ENCODE measurements at regions of chr2 and their contacts with region 1.

Region 1: DNA sequence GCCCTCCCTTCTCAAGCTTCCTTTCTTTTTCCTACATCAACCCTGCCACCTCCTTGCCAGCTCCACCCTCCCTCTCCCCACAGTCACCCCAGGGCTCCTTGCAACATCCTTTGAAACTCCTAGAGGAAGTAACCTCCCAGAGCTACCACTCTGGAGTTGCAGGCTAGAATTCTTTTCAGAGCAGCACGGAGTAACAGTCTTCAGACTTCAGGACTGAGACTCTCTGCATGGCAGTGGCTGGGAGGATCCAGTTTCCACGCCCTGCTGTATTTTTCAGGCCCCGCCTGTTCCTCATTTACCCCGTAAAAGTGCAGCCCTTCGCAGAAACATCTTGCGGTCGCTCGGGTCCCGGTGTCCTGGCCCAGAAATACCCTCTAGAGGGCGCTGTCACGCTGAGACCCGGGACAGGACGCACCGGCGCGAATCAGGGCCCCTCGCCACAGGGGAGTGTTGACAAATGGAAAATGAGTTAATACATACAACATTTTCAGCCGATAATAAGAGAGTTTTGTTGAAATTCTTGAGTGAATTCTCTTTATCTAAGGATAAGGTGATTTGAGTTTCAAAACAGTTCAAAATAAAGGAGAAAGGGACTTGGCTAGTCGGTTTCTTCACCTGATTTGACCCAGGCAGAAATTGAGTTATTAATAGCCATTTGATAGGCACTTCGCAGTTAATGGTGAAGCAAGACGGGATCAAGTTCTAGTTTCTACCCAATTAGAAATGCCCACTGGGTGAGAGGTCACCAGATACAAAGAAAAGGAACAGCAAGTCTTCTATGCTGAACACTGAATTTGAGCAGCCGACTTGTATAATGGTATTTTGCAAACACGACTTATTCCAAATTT is 18.5 kb upstream of the NTSR2 start:
- DNase-seq: peak; percentile 80
- CTCF ChIP-seq: peak; percentile 83

Region 2: DNA sequence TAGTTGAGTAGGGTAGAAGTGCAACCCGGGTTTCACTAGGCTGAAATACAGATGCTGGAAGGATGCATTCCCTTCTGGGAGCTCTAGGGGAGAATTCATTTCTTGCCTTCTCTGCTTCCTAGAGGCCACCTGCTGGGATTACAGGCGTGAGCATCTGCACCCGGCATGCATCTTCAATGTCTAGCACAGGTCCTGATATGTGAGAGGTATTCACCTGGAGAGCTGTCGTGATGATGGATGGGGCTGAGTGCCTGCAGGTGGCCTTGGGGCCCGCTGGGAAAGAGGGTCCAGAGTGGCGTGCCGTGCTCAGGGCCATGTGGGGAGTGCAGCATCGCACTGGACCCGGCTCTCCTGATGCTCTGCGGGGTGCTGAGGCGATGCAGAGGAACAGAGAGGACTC is 11.8 kb before region 1 on chr2:
- CTCF ChIA-PET with region 1: interaction called, 10 read pairs
- POLR2A ChIA-PET with region 1: no interaction called
- DNase-seq: no peak
- CTCF ChIP-seq: no peak

Region 3: DNA sequence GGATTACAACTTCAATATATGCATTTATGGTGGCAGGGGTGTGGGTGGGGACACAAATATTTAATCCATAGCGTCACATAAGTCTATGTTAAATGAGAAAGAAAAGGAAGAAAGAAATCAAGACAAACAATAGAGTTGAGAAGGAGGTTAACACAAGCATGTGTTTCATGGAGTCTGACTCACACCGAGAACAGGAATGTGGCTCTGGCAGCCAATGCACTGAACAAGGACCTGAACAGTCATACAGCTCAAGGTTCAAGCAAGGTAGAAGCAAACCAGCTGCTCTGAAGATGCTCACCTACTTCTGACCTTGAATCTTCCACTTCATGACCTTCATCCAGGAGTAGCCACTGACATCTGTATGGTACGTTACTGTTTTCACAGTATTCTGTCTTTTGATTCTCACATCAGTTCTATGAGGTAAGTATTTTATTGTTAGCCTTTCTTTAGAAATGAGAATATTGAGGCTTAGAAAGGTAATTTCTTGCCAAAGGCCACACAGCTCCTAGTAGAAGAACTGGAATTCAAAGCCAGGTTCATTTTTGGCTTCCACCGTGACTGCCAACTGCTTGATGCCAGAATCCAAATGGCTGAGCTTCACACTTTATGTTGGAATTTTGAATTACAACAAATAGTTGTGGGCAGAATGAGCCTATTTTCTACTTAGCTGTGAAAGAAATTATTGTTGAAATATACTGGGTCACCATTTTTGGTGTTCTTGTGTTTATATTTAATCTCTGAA is 22.0 kb after region 1 on chr2:
- CTCF ChIA-PET with region 1: interaction called, 20 read pairs
- POLR2A ChIA-PET with region 1: no interaction called
- DNase-seq: no peak
- CTCF ChIP-seq: no peak

Region 4: DNA sequence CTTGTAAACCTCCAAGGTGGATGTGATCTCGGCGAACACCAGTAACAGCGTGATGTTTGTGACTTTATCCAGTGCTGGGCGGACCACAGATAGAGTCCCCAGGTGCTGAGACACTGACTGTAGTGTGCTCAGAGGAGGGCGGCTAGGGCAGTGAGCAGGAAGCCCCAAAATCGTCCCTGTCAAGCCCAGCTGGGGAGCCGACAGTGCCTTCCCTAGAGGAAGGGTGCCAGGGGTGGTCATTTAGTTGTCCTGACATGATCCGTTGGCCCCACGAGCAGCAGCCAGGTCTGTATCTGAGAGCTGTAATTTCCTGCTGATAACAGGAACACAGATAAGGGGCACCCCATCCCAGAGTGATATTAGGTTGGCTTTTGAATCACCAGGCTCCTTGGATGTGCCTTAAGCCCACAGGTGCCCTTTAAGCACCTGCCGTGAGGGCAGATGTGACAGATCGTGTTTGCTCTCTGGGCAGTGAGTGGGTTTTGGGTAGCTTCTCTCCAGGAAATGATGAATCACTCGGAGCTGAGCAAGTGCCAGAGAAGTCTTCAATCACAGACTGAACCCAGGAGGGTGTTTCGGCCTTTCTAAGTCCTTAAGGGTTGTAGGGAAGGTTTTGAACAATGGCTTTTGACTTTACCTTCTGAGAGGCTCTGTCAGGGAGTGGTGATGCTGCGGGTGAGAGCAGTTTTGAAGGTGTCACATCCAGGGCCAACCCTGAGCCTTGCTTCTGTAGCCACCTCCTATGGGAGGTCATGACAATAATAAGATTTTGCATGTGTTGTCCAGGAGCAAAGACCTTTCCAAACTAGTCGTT is 65.6 kb after region 1 on chr2:
- CTCF ChIA-PET with region 1: interaction called, 15 read pairs
- POLR2A ChIA-PET with region 1: no interaction called
- DNase-seq: peak; percentile 39
- CTCF ChIP-seq: no peak

Region 5: GRCh38 chr2:11784747-11785610 is 96.5 kb after region 1 on chr2:
- CTCF ChIA-PET with region 1: interaction called, 217 read pairs
- POLR2A ChIA-PET with region 1: interaction called, 3 read pairs
- DNase-seq: peak; percentile 81
- CTCF ChIP-seq: peak; percentile 91